ENCODE measurements at regions of chr16 and their contacts with region 1.

Region 1: DNA sequence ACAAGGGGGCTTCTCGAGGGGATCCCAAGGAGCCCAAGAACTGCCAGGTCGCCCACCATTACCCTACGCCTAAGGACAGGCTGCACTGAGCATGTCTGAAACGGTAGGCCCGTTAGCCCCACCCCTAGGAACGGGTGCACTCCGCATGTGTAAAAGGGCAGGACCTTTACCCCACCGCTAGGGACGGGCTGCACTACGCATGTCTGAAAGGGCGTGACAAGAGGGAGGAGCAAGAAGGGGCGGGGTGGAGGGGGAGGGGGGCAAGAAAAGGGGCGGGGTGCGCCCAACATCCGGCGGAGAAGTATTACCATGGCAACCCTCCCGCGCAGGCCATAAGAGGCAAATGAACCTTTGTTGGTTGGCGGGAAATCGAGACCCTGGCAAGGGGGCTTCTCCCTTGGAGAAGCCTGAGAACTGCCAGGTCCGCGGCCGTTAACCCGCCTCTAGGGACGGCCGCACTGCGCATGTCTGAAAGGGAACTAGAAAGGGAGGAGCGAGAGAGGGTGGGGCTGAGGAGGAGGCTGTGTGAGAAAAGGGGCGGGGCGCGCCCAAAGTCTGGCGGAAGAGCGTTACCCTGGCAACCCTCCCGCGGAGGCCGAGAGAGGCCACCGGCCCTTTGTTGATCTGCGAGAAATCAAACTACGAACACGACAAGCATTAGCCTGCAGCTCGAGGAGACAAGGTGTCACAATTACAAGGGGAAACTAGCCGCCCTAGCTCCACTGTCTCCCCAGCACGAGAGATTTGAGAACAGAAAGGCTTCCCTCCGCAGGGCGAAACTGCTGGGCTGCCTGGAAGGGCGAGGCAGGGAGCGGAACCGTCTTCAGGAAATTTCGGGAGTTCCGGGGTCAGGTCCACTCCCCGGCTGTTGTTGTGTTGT is 2046.8 kb downstream of the TP53TG3F start:
- DNase-seq: peak; percentile 80 to 86 (median 83)
- ATAC-seq: peak; percentile 99
- H3K4me3 ChIP-seq: peak overlapping the region; percentile 42
- H3K27ac ChIP-seq: peak overlapping the region; percentile 56; the same call in 2 of the 3 replicates
- H3K4me1 ChIP-seq: peaks cover 0 to 8% of the 10 kb centered on the region in 2 experiments; a peak in 1 of 5 replicates
- H3K27me3 ChIP-seq: no peaks in the 10 kb centered on the region
- CTCF ChIP-seq: 0 out of 6 replicates have a peak, but pooled peaks of 1 of the 3 experiments have one; percentile 7
- EP300 ChIP-seq: no peak
- POLR2A ChIP-seq: no peak
- RAD21 ChIP-seq: no peak

Region 2: GRCh38 chr16:35140293-35140986 is 365.8 kb before region 1 on chr16:
- CTCF ChIA-PET with region 1: no interaction called
- POLR2A ChIA-PET with region 1: interaction called, 3 read pairs
- in situ Hi-C with region 1: loop called (anchors 5 kb)
- intact Hi-C with region 1: no loop called
- DNase-seq: no peak
- ATAC-seq: no peak
- H3K4me3 ChIP-seq: no peak overlapping the region
- H3K27ac ChIP-seq: no peak overlapping the region
- H3K4me1 ChIP-seq: no peaks in the 10 kb centered on the region
- H3K27me3 ChIP-seq: no peaks in the 10 kb centered on the region
- CTCF ChIP-seq: no peak
- EP300 ChIP-seq: no peak
- POLR2A ChIP-seq: no peak
- RAD21 ChIP-seq: no peak

Measured in K562 (cell line).